Spleen (tissue), 13 donors: ENCODE measurements at regions of chr17 and their contacts with region 1.

Region 1: GRCh38 chr17:6666077-6666521 is 14.5 kb downstream of the C17orf100 start:
- DNase-seq: peak; percentile 84
- H3K4me3 ChIP-seq: no peak overlapping the region
- H3K27ac ChIP-seq: no peak overlapping the region
- H3K4me1 ChIP-seq: peaks cover 3 to 30% (median 13%) of the 10 kb centered on the region in 6 donors
- H3K27me3 ChIP-seq: no peaks in the 10 kb centered on the region
- CTCF ChIP-seq: peak; percentile 64 to 87 (median 85)
- POLR2A ChIP-seq: no peak

Region 2: DNA sequence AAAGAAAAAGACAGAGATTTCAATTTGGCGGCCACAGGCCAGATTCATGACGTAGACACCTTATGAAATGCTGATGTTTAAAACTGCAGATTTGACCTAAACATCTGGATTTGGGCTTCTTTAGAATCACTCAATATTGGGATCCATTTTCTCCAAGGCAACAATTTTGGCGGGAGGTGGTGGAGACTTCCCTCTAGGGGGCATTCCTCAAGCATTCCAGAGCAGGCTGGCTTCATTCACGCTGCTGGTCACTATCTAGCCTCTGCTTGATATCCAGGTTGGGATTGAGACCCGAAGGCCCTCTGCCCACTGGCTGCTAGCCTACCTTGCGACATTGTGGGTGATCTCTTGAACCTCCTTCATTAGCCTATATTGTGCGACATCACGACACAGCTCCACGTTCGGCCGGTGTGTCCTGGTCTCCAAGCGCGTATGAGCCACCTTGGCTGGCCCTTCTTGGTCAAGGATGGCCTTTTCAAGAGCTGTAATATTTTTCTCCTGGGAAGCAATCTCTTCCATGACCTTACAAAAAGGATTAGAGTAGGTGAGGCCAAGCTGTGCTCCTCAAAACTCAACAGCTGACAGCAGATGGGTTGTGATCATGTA is 134.4 kb after region 1 on chr17:
- intact Hi-C with region 1: loop called (anchors 5 kb)
- DNase-seq: no peak
- H3K4me3 ChIP-seq: no peak overlapping the region
- H3K27ac ChIP-seq: no peak overlapping the region
- H3K4me1 ChIP-seq: no peaks in the 10 kb centered on the region
- H3K27me3 ChIP-seq: no peaks in the 10 kb centered on the region
- CTCF ChIP-seq: peak in 1 of 11 experiments; percentile 40
- POLR2A ChIP-seq: no peak

Region 3: DNA sequence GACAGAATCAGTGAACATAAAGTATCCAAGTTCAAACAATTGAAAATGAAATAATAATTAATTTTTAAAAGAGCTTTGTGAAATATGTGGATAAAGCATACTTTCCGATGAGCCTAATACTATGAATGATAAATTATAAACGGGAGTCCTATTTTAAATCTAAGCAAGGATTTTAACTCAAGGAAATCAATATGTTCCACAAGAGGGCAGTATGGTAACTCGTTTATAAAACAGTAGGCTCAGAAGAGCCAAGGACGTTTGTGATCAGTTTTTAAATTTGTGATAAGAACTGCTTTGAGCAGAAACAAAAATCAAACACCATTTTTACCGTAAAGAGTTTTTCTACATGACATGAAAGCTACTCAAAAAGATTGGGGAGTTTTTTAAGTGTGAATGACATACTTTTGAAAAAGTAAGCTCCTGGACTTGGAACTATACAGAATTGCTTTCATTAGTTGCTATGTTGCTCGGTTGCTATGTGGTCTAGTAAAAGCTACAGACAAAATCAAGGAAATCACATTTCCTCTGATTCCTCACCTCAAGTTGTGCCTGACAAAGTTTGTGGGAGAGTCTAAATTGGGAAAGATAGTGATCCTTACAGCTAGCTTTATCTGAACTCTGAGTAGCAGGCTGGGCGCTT is 177.3 kb after region 1 on chr17:
- intact Hi-C with region 1: no loop called
- DNase-seq: no peak
- H3K4me3 ChIP-seq: no peak overlapping the region
- H3K27ac ChIP-seq: no peak overlapping the region
- H3K4me1 ChIP-seq: peaks cover 0 to 10% (median 5%) of the 10 kb centered on the region in 6 donors
- H3K27me3 ChIP-seq: peaks cover 0 to 43% (median 4%) of the 10 kb centered on the region in 7 donors
- CTCF ChIP-seq: peak; percentile 16 to 66 (median 52)
- POLR2A ChIP-seq: no peak

Region 4: DNA sequence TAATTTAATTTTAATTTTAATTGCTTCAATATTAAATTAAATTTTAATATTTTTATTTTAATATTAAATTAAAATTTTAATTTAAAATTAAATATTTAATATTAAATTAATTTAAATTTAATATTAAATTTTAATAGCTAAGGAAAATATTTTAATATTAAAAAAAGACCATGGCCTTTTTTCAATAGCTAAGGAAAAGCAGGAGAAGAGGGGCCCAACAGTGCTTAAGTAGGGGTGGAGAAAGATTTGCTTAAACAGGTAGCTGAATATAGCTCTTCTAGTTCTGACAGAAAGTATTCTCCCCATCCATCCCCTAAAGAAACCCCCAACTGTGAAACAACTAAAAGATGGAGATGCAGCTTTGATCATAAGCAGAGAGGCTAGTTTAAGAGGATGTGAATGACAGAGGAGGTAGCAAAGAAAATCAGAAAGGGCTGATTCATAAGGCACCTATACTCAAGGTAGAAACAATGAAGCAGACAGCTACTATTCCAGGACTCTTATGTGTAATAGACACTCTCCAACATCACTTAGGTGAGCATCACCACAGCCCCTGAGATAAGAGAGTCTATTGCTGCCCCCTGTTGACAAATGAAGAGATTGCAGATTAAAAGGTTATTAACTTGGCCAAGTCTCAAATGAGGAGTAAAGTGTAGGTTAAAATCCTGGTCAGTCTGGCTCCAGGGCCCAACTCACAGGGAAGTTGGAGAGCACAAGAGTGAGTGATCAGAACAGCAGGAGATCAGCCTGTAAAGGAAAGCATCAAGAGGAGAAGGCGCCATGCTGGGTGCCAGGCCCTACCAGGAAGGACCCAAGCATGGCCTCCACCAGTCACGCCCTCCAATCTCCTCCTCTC is 338.5 kb after region 1 on chr17:
- intact Hi-C with region 1: loop called (anchors 10 kb)
- DNase-seq: peak; percentile 80
- H3K4me3 ChIP-seq: no peak overlapping the region
- H3K27ac ChIP-seq: peak overlapping the region in 1 of 8 donors; percentile 28
- H3K4me1 ChIP-seq: peaks cover 1 to 46% (median 27%) of the 10 kb centered on the region in 6 donors
- H3K27me3 ChIP-seq: no peaks in the 10 kb centered on the region
- CTCF ChIP-seq: peak; percentile 50 to 82 (median 75)
- POLR2A ChIP-seq: no peak